HCT116 (cell line): ENCODE measurements at regions of chr14 and their contacts with region 1.

Region 1: GRCh38 chr14:70955543-70956480 is 48.6 kb downstream of the PCNX1 start:
- DNase-seq: no peak
- ATAC-seq: peak; percentile 77
- H3K4me3 ChIP-seq: no peak overlapping the region
- H3K27ac ChIP-seq: no peak overlapping the region
- H3K4me1 ChIP-seq: no peaks in the 10 kb centered on the region
- H3K27me3 ChIP-seq: no peaks in the 10 kb centered on the region
- CTCF ChIP-seq: peak; percentile 58 to 66 (median 65); a peak in 5 of 6 replicates
- POLR2A ChIP-seq: no peak
- RAD21 ChIP-seq: peak; percentile 59

Region 2: DNA sequence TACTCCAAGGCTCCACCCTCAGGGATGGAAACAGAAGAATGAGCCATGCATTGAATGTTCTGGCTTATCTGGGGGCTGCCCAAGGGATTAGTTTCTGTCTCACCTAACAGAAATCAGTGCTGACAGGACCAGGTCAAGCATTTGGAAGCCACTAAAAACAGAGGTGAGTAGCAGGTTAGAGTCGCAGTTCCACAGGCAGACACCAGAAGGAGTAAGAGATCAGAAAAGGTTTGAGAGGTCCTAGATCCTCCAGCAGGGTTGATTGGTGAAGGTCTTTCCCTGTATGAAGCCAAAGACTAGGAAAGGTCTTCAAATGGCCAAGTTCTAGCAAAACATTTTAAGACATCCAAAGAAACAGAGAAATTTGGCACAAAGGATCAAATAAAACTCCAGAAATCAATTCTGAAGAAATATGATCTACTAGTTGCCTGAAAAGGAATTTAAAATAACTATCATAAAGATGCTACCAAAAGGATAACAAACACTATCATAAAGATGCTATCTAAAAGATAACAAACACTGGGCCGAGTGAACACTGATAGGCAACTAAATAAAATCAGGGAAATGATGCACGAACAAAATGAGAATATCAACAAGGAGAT is 333.6 kb before region 1 on chr14:
- CTCF ChIA-PET with region 1: no interaction called
- POLR2A ChIA-PET with region 1: no interaction called
- RAD21 ChIA-PET with region 1: no interaction called
- intact Hi-C with region 1: loop called (anchors 1 kb)
- DNase-seq: peak; percentile 53
- ATAC-seq: peak; percentile 98
- H3K4me3 ChIP-seq: no peak overlapping the region
- H3K27ac ChIP-seq: no peak overlapping the region
- H3K4me1 ChIP-seq: no peaks in the 10 kb centered on the region
- H3K27me3 ChIP-seq: no peaks in the 10 kb centered on the region
- CTCF ChIP-seq: peak; percentile 81 to 89 (median 88)
- POLR2A ChIP-seq: no peak
- RAD21 ChIP-seq: peak; percentile 91

Region 3: GRCh38 chr14:70714055-70714621 is 241.7 kb before region 1 on chr14:
- CTCF ChIA-PET with region 1: no interaction called
- POLR2A ChIA-PET with region 1: no interaction called
- RAD21 ChIA-PET with region 1: no interaction called
- intact Hi-C with region 1: loop called (anchors 10 kb)
- DNase-seq: peak; percentile 54
- ATAC-seq: peak; percentile 47
- H3K4me3 ChIP-seq: no peak overlapping the region
- H3K27ac ChIP-seq: no peak overlapping the region
- H3K4me1 ChIP-seq: peaks cover 0 to 20% of the 10 kb centered on the region in 2 experiments; a peak in 2 of 4 replicates
- H3K27me3 ChIP-seq: no peaks in the 10 kb centered on the region
- CTCF ChIP-seq: peak; percentile 58 to 70 (median 69)
- POLR2A ChIP-seq: no peak
- RAD21 ChIP-seq: peak; percentile 72

Region 4: DNA sequence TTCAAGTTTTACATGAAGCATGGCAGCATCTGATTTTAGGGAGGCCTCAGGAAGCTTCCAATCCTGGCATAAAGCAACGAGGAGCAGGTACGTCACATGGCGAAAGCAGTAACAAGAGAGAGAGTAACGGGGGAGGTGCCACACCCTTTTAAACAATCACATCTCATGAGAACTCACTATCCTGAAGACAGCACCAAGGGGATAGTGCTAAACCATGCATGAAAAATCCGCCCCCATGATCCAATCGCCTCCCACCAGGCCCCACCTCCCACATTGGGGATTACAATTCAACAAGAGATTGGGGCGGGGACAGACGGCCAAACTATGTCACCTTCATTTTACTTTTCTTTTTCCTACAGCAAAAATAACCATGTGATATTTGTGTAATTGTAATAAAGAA is 139.3 kb before region 1 on chr14:
- CTCF ChIA-PET with region 1: interaction called, 22 read pairs
- POLR2A ChIA-PET with region 1: no interaction called
- RAD21 ChIA-PET with region 1: interaction called in 1 of 2 experiments, 3 read pairs
- intact Hi-C with region 1: loop called (anchors 1 kb)
- DNase-seq: no peak
- ATAC-seq: no peak
- H3K4me3 ChIP-seq: no peak overlapping the region
- H3K27ac ChIP-seq: no peak overlapping the region
- H3K4me1 ChIP-seq: peaks cover 8 to 19% of the 10 kb centered on the region in 2 experiments; a peak in 3 of 4 replicates
- H3K27me3 ChIP-seq: no peaks in the 10 kb centered on the region
- CTCF ChIP-seq: no peak
- POLR2A ChIP-seq: no peak
- RAD21 ChIP-seq: no peak

Region 5: DNA sequence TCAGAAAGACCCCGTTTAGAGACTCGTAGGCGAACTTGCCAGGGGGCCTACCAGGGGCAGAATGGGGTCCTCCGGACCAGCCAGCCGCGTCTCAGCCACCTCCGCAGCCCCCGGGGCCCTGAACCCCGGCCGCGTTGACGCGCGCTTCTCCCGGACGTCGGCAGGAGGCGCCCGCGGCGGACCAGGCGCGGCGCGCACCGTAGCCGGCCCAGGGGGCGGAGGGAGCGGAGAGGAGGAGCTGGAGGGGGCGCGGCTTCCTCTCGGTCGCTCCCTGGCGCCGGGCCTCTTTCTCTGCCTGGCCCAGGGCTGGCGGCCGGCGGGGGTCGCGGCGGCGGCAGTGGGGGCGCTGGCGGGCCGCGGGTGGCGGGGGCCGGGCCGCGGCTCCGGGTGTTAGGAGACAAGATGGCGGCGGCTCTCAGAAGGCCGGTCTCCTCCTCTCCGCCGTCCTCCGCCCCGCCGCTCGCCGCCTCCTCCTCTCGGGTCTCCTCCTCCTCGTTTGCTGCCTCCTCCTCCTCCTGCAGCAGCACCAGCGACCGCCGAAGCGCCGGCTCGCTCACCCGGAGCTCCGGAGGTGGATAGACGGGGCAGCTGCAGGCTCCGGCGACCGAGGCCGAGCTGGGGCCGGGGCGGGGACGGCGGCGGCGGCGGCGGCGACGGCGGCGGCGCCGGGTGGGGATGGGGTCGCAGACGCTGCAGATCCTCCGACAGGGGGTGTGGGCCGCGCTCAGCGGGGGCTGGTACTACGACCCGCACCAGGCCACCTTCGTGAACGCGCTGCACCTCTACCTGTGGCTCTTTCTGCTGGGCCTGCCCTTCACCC is 48.4 kb before region 1 on chr14 and contains the start of gene PCNX1:
- CTCF ChIA-PET with region 1: interaction called, 3 read pairs
- POLR2A ChIA-PET with region 1: no interaction called
- RAD21 ChIA-PET with region 1: no interaction called
- intact Hi-C with region 1: loop called (anchors 5 kb)
- DNase-seq: peak; percentile 46
- ATAC-seq: peak; percentile 86
- H3K4me3 ChIP-seq: peak within 1 kb of the TSS; percentile 61 to 75
- H3K27ac ChIP-seq: peak within 1 kb of the TSS; percentile 74
- H3K4me1 ChIP-seq: peaks cover 9 to 30% of the 10 kb centered on the region in 2 experiments
- H3K27me3 ChIP-seq: no peaks in the 10 kb centered on the region
- CTCF ChIP-seq: peak; percentile 50 to 87 (median 66); a peak in 5 of 6 replicates
- POLR2A ChIP-seq: peak; percentile 24
- RAD21 ChIP-seq: peak; percentile 41
- total RNA-seq, gene PCNX1: 52.2 TPM